MCF 10A (cell line): ENCODE measurements at regions of chr9 and their contacts with region 1.

Region 1: DNA sequence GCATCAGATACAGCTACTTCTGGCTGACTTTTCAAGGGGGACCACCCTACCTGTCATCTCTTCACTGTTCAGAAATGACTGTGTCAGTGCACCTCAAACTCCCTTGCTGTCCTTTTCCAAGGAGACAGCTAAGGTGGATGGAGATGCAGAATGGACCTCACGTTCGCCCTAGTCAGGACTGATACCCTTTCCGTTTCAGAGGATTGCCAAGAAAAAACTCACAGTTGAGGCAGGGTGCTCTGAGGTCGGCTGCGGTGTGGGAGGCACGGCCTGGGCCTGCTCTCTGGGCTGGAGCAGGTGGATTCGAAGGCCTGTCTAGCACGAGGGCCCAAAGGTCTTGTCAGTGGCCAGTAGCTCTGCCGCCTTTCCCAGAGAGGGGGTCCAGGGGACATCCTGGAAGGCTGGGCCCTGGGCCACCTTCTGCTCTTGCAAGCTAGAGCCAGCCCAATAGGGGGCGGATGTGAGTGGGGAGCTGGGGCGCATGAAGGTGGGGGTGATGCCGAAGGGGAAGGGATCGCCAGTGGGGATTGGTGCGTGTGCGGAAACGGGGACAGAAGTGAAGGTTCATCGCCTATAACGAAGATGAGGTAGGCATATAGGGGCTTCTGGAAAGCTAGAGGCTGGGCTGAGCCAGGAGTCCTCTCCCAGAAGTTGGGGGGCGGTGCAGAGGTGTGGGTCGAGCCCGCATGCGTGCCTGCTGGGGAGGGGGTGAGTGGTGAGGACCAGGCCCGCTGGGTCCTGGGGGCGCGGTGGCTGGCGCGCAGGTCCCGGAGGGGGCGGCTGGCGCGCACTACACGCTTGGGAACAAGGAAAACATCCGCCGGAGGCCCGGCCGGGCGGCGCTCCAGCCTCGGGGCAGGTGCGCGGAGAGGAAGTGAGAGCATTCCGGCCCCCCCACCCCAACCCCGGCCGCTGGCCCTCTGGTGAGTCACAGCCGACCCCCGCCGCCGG is 2.5 kb upstream of the MSMP start:
- DNase-seq: peak; percentile 70
- H3K4me3 Mint-ChIP-seq: peak overlapping the region; percentile 97
- H3K27ac Mint-ChIP-seq: peak overlapping the region; percentile 98
- H3K4me1 Mint-ChIP-seq: peaks cover 20% of the 10 kb centered on the region
- H3K27me3 Mint-ChIP-seq: no peaks in the 10 kb centered on the region
- CTCF ChIP-seq: peak; percentile 61

Region 2: DNA sequence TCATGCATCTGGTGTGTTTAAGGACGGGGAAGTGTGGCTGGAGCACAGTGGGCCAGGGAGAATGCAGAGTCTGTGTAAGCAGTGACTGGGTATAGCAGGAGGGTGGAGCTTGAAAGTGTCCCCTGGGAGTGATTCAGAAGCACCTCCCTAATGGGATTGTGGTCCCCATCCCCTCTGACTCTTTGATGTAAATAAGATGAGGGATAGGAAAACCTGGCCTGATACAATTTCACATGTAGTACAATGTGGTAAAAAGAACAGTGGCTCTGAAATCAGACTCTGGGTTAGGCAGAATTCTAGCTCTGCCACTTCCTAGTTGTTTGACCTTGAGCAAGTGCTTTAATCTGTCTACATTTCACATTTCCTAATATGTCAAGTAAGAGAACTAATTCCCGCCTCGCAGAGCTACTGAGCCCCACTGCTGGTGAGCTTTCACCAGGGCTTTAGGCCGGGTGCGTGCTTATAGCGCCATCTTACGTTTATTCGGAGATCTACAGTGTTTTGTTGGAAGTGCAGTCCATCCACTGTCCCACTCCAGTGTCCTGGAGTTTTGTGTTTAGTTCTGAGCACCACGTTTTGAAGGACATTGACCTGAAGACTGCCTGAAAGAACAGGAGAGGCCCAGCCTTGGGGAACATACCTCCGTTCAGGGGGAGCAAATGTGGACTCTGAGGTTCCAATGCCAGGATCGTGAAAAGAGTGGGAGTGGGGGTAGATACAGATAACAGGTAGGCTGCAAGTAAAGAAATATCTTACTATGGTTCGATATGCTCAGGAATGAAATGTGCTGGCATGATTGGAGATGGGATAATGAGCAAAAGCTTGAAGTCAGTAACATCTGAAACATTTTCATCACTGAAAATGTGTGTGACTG is 202.6 kb before region 1 on chr9:
- CTCF ChIA-PET with region 1: no interaction called
- POLR2A ChIA-PET with region 1: no interaction called
- intact Hi-C with region 1: no loop called
- DNase-seq: peak; percentile 78
- H3K4me3 Mint-ChIP-seq: no peak overlapping the region
- H3K27ac Mint-ChIP-seq: no peak overlapping the region
- H3K4me1 Mint-ChIP-seq: peaks cover 12% of the 10 kb centered on the region
- H3K27me3 Mint-ChIP-seq: no peaks in the 10 kb centered on the region
- CTCF ChIP-seq: peak; percentile 90

Region 3: GRCh38 chr9:35769763-35770162 is 13.2 kb after region 1 on chr9:
- CTCF ChIA-PET with region 1: interaction called, 10 read pairs
- POLR2A ChIA-PET with region 1: interaction called, 24 read pairs
- intact Hi-C with region 1: no loop called
- DNase-seq: no peak
- H3K4me3 Mint-ChIP-seq: no peak overlapping the region
- H3K27ac Mint-ChIP-seq: no peak overlapping the region
- H3K4me1 Mint-ChIP-seq: no peaks in the 10 kb centered on the region
- H3K27me3 Mint-ChIP-seq: no peaks in the 10 kb centered on the region
- CTCF ChIP-seq: no peak

Region 4: DNA sequence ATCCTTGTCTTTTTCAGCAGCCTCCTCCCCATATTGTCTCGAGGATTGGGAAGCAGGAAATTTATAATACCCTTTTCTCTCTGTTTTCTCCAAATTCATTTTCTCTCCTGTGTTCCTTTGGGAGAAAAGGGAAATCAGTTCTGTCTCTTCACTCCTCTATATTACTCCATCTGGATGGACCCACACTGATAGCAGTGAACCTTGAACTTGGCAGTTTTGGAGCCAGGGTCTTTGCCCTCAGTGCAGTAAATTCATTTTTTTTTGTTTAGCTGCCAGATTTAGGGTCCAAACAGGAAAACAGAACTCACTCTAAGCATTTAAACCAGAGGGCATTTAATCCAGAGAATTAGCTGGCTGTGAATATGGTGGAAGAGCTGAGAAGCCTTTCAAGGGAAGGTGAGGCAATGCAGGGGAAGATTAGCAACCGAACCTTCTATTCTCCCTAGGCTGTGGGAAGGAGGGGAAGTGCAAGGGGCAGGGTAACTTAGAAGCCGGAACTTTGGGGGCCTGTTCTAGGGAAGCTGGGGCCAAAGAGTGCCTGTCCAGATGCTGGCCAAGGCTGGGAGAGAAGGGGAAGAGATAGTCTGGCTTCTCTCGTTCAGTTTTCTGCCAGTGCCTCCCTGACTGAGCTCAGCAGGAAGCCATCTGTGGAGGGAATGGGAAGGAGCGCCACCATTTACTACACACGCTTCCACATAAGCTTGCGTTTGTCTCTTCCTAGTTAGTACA is 18.5 kb after region 1 on chr9:
- CTCF ChIA-PET with region 1: interaction called, 7 read pairs
- POLR2A ChIA-PET with region 1: interaction called, 24 read pairs
- intact Hi-C with region 1: no loop called
- DNase-seq: no peak
- H3K4me3 Mint-ChIP-seq: no peak overlapping the region
- H3K27ac Mint-ChIP-seq: no peak overlapping the region
- H3K4me1 Mint-ChIP-seq: no peaks in the 10 kb centered on the region
- H3K27me3 Mint-ChIP-seq: no peaks in the 10 kb centered on the region
- CTCF ChIP-seq: no peak